Naive thymus-derived CD4-positive, alpha-beta T cell (primary cell): ENCODE measurements at regions of chr19 and their contacts with region 1.

Region 1: GRCh38 chr19:34181111-34181864 is 9.0 kb downstream of the LSM14A start:
- DNase-seq: no peak
- ATAC-seq: no peak
- H3K4me3 ChIP-seq: no peak overlapping the region
- H3K4me3 Mint-ChIP-seq: peak overlapping the region in 9 of 10 donors; percentile 17 to 93 (median 61)
- H3K27ac ChIP-seq: no peak overlapping the region
- H3K27ac Mint-ChIP-seq: peak overlapping the region in 8 of 9 donors; percentile 26 to 85 (median 50)
- H3K4me1 ChIP-seq: peaks cover 69 to 78% of the 10 kb centered on the region in 2 donors
- H3K4me1 Mint-ChIP-seq: peaks cover 62 to 99% (median 90%) of the 10 kb centered on the region in 7 donors
- H3K27me3 ChIP-seq: no peaks in the 10 kb centered on the region
- H3K27me3 Mint-ChIP-seq: no peaks in the 10 kb centered on the region

Region 2: DNA sequence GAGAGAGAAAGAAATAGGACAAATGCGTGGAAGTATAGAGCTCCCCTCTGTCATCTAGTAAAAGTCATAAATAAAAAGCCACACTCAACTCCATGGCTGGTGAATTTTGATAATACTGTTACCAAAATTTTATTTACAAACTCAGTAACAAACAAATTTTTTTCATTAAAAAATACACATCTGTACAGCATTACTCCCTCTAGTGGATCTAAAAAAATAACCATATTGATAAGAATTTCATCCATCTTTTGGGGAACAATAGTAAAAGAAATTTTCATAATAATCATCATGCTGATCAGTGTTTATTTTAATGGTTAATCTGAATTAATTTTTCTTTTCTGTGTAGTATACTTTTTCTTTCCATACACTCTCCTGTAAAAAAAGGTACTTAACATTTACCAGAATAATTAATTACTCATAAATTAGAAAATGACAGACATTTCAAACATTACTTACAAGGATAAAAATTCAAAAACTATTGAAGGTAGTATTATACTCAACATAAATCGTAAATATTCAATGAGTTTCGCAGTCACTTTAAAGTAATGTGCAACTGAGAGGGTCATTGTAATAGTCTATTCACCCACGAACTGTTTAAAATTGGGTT is 182.4 kb before region 1 on chr19:
- CTCF ChIA-PET with region 1: no interaction called
- POLR2A ChIA-PET with region 1: no interaction called
- intact Hi-C with region 1: no loop called
- DNase-seq: no peak
- ATAC-seq: no peak
- H3K4me3 ChIP-seq: no peak overlapping the region
- H3K4me3 Mint-ChIP-seq: no peak overlapping the region
- H3K27ac ChIP-seq: no peak overlapping the region
- H3K27ac Mint-ChIP-seq: no peak overlapping the region
- H3K4me1 ChIP-seq: no peaks in the 10 kb centered on the region
- H3K4me1 Mint-ChIP-seq: no peaks in the 10 kb centered on the region
- H3K27me3 ChIP-seq: peaks cover 0 to 5% of the 10 kb centered on the region in 2 donors
- H3K27me3 Mint-ChIP-seq: peaks cover 13 to 34% (median 28%) of the 10 kb centered on the region in 5 donors

Region 3: DNA sequence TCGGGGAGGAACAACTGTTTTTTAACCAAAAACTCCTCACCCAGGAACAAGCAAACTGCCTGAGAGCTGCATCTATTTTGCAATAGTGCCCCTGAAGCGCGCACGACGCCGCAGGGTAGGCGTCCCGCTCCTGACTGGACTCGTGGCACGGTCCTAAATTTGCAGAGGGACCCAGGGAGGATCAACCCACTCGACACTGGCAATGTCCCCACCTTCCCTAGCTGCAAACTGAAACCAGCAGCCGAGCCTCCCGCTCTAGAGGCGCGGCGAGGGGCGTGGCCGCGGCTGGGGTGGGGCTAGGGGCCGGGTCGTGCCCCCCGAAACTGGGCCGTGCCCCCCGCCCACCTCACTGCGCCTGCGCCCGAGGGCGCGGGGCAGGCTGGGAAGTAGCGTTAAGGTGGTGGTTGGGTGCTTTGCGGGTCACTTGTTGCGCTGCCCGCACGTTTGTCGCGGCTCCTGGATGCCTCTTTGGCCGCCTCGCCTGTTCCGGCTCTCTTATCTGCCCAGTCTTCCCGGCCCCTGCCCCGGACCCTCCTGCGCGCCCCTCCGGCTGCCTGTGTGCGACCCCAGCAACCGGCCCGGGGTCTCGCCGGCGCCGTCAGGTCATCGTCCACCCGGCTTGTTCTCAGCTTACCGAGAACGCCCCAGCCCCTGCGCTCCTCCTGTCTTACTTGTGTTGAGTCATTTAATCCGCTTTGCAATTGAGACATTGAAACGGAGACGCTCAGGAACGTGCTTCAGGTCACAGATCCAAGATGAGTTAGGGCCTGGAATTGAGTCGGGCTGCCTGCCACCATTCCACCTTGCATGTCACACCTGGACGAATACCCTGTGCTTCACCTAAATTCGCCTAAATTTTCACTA is 46.9 kb before region 1 on chr19:
- CTCF ChIA-PET with region 1: no interaction called
- POLR2A ChIA-PET with region 1: no interaction called
- intact Hi-C with region 1: no loop called
- DNase-seq: peak; percentile 79 to 92 (median 87)
- ATAC-seq: peak; percentile 99
- H3K4me3 ChIP-seq: peak overlapping the region; percentile 91
- H3K4me3 Mint-ChIP-seq: peak overlapping the region; percentile 94 to 97 (median 95)
- H3K27ac ChIP-seq: peak overlapping the region; percentile 91
- H3K27ac Mint-ChIP-seq: peak overlapping the region; percentile 90 to 96 (median 91)
- H3K4me1 ChIP-seq: peaks cover 0 to 7% of the 10 kb centered on the region in 2 donors
- H3K4me1 Mint-ChIP-seq: peaks cover 3 to 11% (median 8%) of the 10 kb centered on the region in 7 donors
- H3K27me3 ChIP-seq: no peaks in the 10 kb centered on the region
- H3K27me3 Mint-ChIP-seq: peaks cover 0 to 3% (median 0%) of the 10 kb centered on the region in 5 donors

Region 4: DNA sequence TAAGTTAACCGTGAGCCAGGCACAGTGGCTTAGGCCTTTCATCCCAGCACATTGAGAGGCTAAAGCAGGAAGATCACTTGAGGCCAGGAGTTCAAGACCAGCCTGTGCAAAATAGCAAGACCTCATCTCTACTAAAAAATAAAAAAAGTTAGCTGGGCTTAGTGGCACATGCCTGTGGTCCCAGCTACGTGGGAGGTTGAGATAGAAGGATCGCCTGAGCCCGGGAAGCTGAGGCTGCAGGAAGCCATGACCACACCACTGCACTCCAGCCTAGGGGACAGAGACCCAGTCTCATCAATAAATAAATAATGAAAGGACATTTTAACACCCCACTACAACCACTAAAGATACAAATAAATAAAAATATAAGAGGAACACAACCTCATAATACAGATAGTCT is 12.6 kb after region 1 on chr19:
- CTCF ChIA-PET with region 1: no interaction called
- POLR2A ChIA-PET with region 1: interaction called, 3 read pairs
- intact Hi-C with region 1: loop called in 1 of 2 experiments (anchors 2 kb)
- DNase-seq: no peak
- ATAC-seq: no peak
- H3K4me3 ChIP-seq: no peak overlapping the region
- H3K4me3 Mint-ChIP-seq: no peak overlapping the region
- H3K27ac ChIP-seq: no peak overlapping the region
- H3K27ac Mint-ChIP-seq: peak overlapping the region in 5 of 9 donors; percentile 23 to 64 (median 31)
- H3K4me1 ChIP-seq: peaks cover 19 to 24% of the 10 kb centered on the region in 2 donors
- H3K4me1 Mint-ChIP-seq: peaks cover 13 to 47% (median 35%) of the 10 kb centered on the region in 7 donors
- H3K27me3 ChIP-seq: no peaks in the 10 kb centered on the region
- H3K27me3 Mint-ChIP-seq: no peaks in the 10 kb centered on the region